ENCODE measurements at regions of chr5 and their contacts with region 1.

Region 1: GRCh38 chr5:29238115-29238514 is 1955.4 kb upstream of the CDH6 start:
- DNase-seq: no peak
- ATAC-seq: no peak

Region 2: GRCh38 chr5:28164568-28164967 is 1073.5 kb before region 1 on chr5:
- intact Hi-C with region 1: loop called (anchors 5 kb)
- DNase-seq: no peak
- ATAC-seq: no peak

Region 3: DNA sequence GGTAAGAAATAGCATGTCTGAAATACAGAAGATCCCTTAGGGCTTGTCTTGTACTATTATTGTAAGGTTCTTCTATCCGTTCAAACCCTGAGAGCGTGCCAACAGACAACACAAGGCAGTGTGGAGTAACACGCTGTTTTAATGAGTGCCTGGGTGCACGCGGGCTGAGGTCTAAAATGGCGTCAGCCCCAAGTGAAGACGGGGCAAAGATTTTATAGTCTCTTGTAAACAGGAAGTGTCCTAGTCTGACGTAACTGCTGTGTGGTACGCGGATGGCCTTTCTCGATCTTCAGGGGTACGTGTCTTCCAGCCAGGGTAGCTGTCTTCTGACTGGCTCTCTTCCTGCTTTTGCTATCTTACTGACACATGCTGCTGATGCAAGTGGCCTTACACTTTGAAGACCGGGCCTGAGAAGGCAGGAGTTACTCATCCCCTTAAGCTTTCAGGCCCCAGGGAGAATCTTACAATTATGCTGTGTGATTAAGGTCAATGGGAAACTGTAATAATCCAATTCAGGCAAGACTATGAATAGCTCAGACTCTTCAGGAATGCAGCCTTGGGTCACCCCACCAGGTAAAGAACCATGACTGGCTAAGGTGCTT is 387.7 kb before region 1 on chr5:
- intact Hi-C with region 1: no loop called
- DNase-seq: no peak
- ATAC-seq: no peak